Activated T-helper 1 cell treated with anti-CD3 and anti-CD28 coated beads, Interleukin-12 subunit alpha, Interleukin-12 subunit beta, Interleukin-2, Interleukin-4 antibody, amounts not matched to agents 30 ng/mL and 10 ng/mL and 1 ng/mL, durations not matched to agents 14 hours and 24 hours and 36 hours (primary cell): ENCODE measurements at regions of chr14 and their contacts with region 1.

Region 1: GRCh38 chr14:54329082-54329695 is 67.6 kb upstream of the CDKN3 start:
- DNase-seq: no peak
- H3K4me3 Mint-ChIP-seq: no peak overlapping the region
- H3K27ac Mint-ChIP-seq: no peak overlapping the region
- H3K4me1 Mint-ChIP-seq: no peaks in the 10 kb centered on the region
- H3K27me3 Mint-ChIP-seq: peaks cover 10% of the 10 kb centered on the region

Region 2: DNA sequence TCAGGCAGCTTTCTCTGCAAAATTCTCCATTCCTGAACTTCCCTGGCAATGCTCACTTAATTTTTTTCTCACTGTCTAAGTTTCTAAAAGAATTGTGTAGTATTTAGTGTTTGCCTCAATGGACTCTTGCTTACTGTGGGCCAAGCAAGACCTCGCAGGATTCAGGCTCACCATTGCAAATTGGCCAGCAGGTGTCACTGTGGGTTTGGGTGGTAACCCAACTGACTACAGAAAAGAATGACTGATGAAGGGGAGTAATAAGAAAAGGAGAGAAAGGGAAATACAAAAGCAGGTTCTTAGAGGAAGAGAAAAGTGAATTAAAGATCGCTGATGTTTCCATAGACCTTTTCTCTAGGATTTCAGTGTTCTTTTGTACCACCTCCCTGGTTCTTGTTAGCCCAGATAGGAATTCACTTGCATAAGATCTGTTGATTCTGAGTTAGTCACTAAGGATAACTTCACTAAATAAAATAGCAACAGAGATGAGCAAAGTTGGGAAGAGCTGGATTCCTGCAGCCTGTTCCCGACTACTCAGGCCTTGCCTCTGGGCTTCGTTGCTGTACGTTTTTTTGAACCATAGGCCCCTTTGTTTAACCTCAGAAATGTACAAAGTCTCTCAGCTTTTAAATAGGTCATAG is 789.6 kb before region 1 on chr14:
- intact Hi-C with region 1: loop called (anchors 1 kb)
- DNase-seq: peak; percentile 5
- H3K4me3 Mint-ChIP-seq: no peak overlapping the region
- H3K27ac Mint-ChIP-seq: no peak overlapping the region
- H3K4me1 Mint-ChIP-seq: no peaks in the 10 kb centered on the region
- H3K27me3 Mint-ChIP-seq: no peaks in the 10 kb centered on the region